ENCODE measurements at regions of chr1 and their contacts with region 1.

Region 1: GRCh38 chr1:171801487-171801891 is 20.0 kb downstream of the METTL13 start:
- DNase-seq: peak; percentile 61 to 67 (median 63)
- ATAC-seq: peak; percentile 79
- H3K4me3 ChIP-seq: no peak overlapping the region
- H3K27ac ChIP-seq: no peak overlapping the region
- H3K4me1 ChIP-seq: peaks cover 0 to 3% of the 10 kb centered on the region in 2 experiments; a peak in 1 of 5 replicates
- H3K27me3 ChIP-seq: no peaks in the 10 kb centered on the region
- CTCF ChIP-seq: peak; percentile 80 to 87 (median 80)
- EP300 ChIP-seq: no peak
- POLR2A ChIP-seq: no peak
- RAD21 ChIP-seq: peak; percentile 82

Region 2: GRCh38 chr1:171712341-171712740 is 89.1 kb before region 1 on chr1:
- CTCF ChIA-PET with region 1: no interaction called
- POLR2A ChIA-PET with region 1: no interaction called
- in situ Hi-C with region 1: no loop called
- intact Hi-C with region 1: no loop called
- DNase-seq: no peak
- ATAC-seq: no peak
- H3K4me3 ChIP-seq: no peak overlapping the region
- H3K27ac ChIP-seq: no peak overlapping the region
- H3K4me1 ChIP-seq: peaks cover 0 to 4% of the 10 kb centered on the region in 2 experiments; a peak in 2 of 5 replicates
- H3K27me3 ChIP-seq: no peaks in the 10 kb centered on the region
- CTCF ChIP-seq: no peak
- EP300 ChIP-seq: no peak
- POLR2A ChIP-seq: no peak
- RAD21 ChIP-seq: no peak

Region 3: DNA sequence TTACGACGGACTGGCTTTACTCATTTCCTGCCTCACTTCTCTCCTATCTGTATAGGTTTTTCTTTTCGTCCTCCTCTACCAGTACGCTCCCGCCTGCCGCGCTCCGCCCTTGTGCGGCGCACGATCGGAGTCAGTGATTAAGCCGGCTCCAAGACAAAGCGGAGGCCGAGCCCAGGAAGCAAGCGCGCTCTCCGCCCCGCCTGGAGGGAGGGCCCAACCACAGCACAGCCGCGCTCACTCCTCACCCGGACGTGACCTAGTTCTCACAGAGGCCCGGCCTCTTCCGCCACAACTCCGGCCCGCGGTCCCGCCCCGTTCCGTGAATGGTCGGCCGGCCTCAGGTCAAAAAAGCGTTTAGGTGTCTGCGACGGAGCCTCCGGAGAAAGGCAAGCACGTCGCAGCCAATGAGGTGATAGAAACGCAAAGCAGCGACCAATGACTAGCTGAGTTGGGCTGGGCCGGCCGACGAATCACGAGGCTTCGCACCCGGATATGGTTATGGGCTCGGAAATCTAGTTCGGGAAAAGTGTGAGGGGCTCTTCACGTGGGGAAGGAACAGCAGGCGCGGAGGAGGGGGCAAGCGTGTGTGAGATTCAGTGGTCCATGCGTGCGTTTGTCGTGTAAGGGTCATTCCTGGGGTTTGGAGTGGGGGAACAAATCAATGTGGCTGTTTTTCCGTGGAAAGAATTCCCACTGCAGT is 20.2 kb before region 1 on chr1 and contains the start of gene METTL13:
- CTCF ChIA-PET with region 1: interaction called, 3 read pairs
- POLR2A ChIA-PET with region 1: interaction called, 11 read pairs
- in situ Hi-C with region 1: no loop called
- intact Hi-C with region 1: no loop called
- DNase-seq: peak; percentile 97 to 100 (median 98)
- ATAC-seq: peak; percentile 98
- H3K4me3 ChIP-seq: peak within 1 kb of the TSS; percentile 76
- H3K27ac ChIP-seq: peak within 1 kb of the TSS; percentile 97
- H3K4me1 ChIP-seq: peaks cover 17 to 28% of the 10 kb centered on the region in 2 experiments; a peak in 4 of 5 replicates
- H3K27me3 ChIP-seq: no peaks in the 10 kb centered on the region
- CTCF ChIP-seq: peak in 1 of 3 experiments; percentile 7; a peak in 1 of 6 replicates
- EP300 ChIP-seq: 0 out of 2 replicates have a peak, but pooled peaks have one; percentile 7
- POLR2A ChIP-seq: peak; percentile 95
- RAD21 ChIP-seq: no peak; a peak in 1 of 4 replicates
- polyA plus RNA-seq, gene METTL13: 18.9 to 23.4 TPM

Region 4: DNA sequence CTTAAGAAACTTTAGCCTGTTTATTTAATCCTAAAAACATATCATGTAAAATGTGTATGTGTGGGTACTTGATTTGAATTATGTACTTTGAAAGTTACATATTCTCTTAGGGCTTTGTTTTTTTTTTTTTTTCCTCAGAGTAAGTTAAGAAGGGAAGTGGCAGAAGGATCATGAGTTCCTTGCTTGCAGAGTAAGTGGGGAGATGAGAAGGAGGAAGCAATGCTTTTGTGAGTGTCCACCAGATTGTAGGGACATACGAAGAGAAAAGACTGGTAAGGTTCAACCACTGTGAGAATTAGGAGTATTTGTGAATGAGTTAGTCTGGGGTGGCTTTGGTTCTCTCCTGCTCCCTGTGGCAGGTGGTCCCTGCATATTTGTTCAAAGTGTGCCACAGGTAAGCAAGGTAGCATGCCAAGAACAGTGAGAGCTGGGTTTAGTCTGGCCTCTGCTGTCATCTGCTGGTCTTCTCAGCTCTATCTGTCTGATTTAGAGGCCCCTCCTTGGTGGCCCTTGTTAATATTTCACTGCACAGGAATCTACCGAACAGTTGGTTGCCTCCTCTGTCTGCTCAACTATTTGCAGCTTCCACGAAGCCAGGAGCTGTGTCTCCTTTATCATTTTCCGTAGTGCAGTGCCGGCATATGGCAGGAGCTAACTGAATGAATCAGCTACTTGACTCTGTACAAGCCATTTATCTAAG is 49.3 kb after region 1 on chr1:
- CTCF ChIA-PET with region 1: interaction called, 11 read pairs
- POLR2A ChIA-PET with region 1: no interaction called
- in situ Hi-C with region 1: no loop called
- intact Hi-C with region 1: no loop called
- DNase-seq: no peak
- ATAC-seq: peak; percentile 66
- H3K4me3 ChIP-seq: no peak overlapping the region
- H3K27ac ChIP-seq: no peak overlapping the region
- H3K4me1 ChIP-seq: no peaks in the 10 kb centered on the region
- H3K27me3 ChIP-seq: peaks cover 2 to 10% of the 10 kb centered on the region in 2 experiments; a peak in 3 of 5 replicates
- CTCF ChIP-seq: peak in 2 of 3 experiments; percentile 23 to 40; a peak in 2 of 6 replicates
- EP300 ChIP-seq: no peak
- POLR2A ChIP-seq: no peak
- RAD21 ChIP-seq: peak; percentile 26 to 54; a peak in 3 of 4 replicates

Region 5: GRCh38 chr1:171919891-171920887 is 118.7 kb after region 1 on chr1:
- CTCF ChIA-PET with region 1: no interaction called
- POLR2A ChIA-PET with region 1: no interaction called
- in situ Hi-C with region 1: no loop called
- intact Hi-C with region 1: loop called (anchors 5 kb)
- DNase-seq: no peak
- ATAC-seq: no peak
- H3K4me3 ChIP-seq: no peak overlapping the region
- H3K27ac ChIP-seq: no peak overlapping the region
- H3K4me1 ChIP-seq: no peaks in the 10 kb centered on the region
- H3K27me3 ChIP-seq: no peaks in the 10 kb centered on the region
- CTCF ChIP-seq: no peak
- EP300 ChIP-seq: no peak
- POLR2A ChIP-seq: no peak
- RAD21 ChIP-seq: no peak

Region 6: DNA sequence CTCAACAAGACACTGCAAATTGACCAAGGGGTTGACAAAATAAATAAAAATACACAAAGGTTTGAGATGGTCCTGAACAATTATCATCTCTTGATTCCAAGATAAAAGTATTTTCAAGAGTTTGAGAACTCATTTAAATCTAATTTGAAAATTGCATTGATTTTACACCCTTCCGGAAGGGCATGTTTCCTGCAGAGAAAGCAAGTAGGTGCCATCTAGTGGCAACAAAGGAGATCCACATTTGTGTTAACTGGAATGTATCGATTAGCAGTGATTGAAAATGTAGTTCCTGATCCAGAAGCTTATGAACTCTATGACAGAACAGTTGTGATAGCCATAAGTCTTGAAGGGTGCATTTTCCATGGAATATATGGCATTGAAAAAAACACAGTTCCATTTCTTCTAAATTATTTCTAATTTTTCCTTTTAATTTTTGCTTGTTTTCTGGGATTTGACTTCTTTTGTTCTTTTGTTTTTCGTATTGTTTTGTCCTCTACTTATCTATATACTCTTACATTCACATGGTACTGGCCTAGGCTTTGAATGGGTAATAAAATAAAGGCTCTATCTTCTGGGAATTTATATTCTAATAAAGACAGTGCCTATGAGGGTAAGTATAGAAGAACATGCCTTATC is 183.5 kb after region 1 on chr1:
- CTCF ChIA-PET with region 1: interaction called, 19 read pairs
- POLR2A ChIA-PET with region 1: no interaction called
- in situ Hi-C with region 1: loop called (anchors 5 kb)
- intact Hi-C with region 1: loop called (anchors 1 kb)
- DNase-seq: peak; percentile 23 to 34 (median 28)
- ATAC-seq: peak; percentile 76
- H3K4me3 ChIP-seq: no peak overlapping the region
- H3K27ac ChIP-seq: no peak overlapping the region
- H3K4me1 ChIP-seq: no peaks in the 10 kb centered on the region
- H3K27me3 ChIP-seq: no peaks in the 10 kb centered on the region
- CTCF ChIP-seq: peak; percentile 62 to 78 (median 67); a peak in 5 of 6 replicates
- EP300 ChIP-seq: no peak
- POLR2A ChIP-seq: no peak
- RAD21 ChIP-seq: peak; percentile 69 to 87

Region 7: DNA sequence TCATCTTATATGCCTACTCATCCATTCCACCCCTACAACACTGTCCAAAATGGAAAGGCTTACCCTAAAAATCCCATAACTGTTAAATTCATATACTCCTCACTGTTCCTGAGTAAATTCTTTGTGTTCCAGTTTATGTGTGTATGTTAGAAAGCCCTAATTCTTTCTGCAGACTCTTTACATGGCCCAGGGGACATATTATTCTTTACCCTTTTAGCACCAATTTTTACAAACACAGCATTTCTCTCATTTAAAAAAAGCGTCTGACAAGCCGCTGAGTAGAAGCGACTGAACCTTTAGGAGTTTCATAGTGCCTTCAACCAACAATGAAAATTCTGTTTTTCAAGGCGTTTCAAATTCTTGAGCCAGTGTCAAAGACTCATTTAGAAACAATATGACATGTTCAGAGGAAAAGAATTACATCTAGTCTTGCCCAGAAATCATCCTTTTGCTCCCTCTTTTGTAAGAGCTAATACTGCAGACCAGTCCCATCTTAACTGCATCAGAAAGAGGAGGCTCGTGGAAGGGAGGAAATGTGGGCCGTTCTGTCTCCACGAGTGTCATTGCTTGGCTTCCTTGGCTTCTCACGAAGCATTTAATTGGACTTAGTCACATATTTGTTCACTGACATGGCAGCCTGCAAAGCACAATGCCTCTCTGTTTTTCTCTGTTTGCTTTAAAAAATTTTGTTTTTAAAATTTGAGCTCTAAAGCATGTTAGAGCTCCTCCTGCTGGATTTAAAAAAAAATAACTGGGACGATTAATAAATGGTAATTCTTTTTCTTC is 597.7 kb after region 1 on chr1:
- CTCF ChIA-PET with region 1: interaction called, 3 read pairs
- POLR2A ChIA-PET with region 1: no interaction called
- in situ Hi-C with region 1: loop called (anchors 10 kb)
- intact Hi-C with region 1: loop called (anchors 5 kb)
- DNase-seq: peak in 2 of 4 experiments; percentile 22 to 25
- ATAC-seq: peak; percentile 39; the same call in 2 of the 3 replicates
- H3K4me3 ChIP-seq: no peak overlapping the region
- H3K27ac ChIP-seq: no peak overlapping the region
- H3K4me1 ChIP-seq: no peaks in the 10 kb centered on the region; a peak in 1 of 5 replicates
- H3K27me3 ChIP-seq: 0 out of 5 replicates have a peak, but pooled peaks cover 0 to 4% of the 10 kb centered on the region in 2 experiments
- CTCF ChIP-seq: peak; percentile 39 to 82 (median 59); a peak in 4 of 6 replicates
- EP300 ChIP-seq: no peak
- POLR2A ChIP-seq: no peak
- RAD21 ChIP-seq: peak; percentile 83 to 86

Region 8: DNA sequence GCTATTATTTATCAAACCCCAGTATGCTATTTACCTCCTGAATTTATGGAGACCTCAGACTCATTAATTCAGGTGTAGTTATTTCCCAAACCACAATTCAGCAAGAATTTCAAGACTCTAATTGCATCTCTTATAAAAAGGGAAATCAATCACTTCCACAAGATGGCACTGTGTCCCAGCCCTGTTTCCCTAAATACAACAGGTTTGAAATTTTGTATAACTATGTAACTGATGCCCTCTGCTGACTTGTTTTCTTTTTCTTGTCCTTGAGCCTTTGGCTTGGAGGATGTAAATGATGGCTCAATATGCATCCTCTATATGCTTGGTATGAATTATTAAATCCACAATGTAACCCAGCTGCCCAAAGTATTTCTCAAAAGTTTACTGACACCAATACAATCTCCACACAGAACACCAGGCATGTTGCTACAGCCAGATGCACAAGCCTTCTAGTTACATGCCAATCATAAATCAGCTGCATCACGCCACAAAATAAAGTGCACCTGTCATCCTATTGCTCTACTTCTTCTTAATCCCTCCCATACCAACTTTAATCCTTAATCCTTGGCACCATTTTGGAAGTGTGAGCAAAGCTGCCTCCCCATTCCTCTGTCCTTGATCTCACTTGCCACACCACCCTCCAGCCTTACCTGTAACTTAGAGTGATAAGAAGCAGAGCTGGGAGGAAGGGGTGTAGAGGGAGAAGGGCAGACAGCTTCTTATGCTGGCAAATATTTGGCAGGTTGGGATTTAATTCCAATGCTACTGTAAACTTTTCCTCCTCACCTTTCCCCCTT is 628.0 kb after region 1 on chr1:
- CTCF ChIA-PET with region 1: interaction called, 3 read pairs
- POLR2A ChIA-PET with region 1: no interaction called
- in situ Hi-C with region 1: no loop called
- intact Hi-C with region 1: loop called (anchors 2 kb)
- DNase-seq: peak; percentile 45 to 80 (median 55)
- ATAC-seq: peak; percentile 82
- H3K4me3 ChIP-seq: no peak overlapping the region
- H3K27ac ChIP-seq: no peak overlapping the region
- H3K4me1 ChIP-seq: peaks cover 0 to 25% of the 10 kb centered on the region in 2 experiments; a peak in 2 of 5 replicates
- H3K27me3 ChIP-seq: no peaks in the 10 kb centered on the region
- CTCF ChIP-seq: peak; percentile 83 to 99 (median 94)
- EP300 ChIP-seq: no peak
- POLR2A ChIP-seq: no peak
- RAD21 ChIP-seq: peak; percentile 93 to 99

Region 9: GRCh38 chr1:173212952-173213491 is 1411.5 kb after region 1 on chr1:
- CTCF ChIA-PET with region 1: no interaction called
- POLR2A ChIA-PET with region 1: no interaction called
- in situ Hi-C with region 1: no loop called
- intact Hi-C with region 1: no loop called
- DNase-seq: no peak
- ATAC-seq: no peak
- H3K4me3 ChIP-seq: no peak overlapping the region
- H3K27ac ChIP-seq: no peak overlapping the region
- H3K4me1 ChIP-seq: no peaks in the 10 kb centered on the region
- H3K27me3 ChIP-seq: no peaks in the 10 kb centered on the region
- CTCF ChIP-seq: no peak
- EP300 ChIP-seq: no peak
- POLR2A ChIP-seq: no peak
- RAD21 ChIP-seq: no peak